Activated CD4-positive, alpha-beta T cell treated with anti-CD3 and anti-CD28 coated beads, Interleukin-2, amount 10 ng/mL, durations not matched to agents 24 days and 14 days (primary cell): ENCODE measurements at regions of chr3 and their contacts with region 1.

Region 1: GRCh38 chr3:52897130-52898122 is at the start of gene STIMATE:
- DNase-seq: peak; percentile 97
- H3K4me3 Mint-ChIP-seq: peak within 1 kb of the TSS; percentile 94
- H3K27ac Mint-ChIP-seq: peak within 1 kb of the TSS; percentile 90
- H3K4me1 Mint-ChIP-seq: peaks cover 42% of the 10 kb centered on the region
- H3K27me3 Mint-ChIP-seq: no peaks in the 10 kb centered on the region
- total RNA-seq, gene STIMATE: 13.8 and 18.6 TPM in 2 replicates

Region 2: DNA sequence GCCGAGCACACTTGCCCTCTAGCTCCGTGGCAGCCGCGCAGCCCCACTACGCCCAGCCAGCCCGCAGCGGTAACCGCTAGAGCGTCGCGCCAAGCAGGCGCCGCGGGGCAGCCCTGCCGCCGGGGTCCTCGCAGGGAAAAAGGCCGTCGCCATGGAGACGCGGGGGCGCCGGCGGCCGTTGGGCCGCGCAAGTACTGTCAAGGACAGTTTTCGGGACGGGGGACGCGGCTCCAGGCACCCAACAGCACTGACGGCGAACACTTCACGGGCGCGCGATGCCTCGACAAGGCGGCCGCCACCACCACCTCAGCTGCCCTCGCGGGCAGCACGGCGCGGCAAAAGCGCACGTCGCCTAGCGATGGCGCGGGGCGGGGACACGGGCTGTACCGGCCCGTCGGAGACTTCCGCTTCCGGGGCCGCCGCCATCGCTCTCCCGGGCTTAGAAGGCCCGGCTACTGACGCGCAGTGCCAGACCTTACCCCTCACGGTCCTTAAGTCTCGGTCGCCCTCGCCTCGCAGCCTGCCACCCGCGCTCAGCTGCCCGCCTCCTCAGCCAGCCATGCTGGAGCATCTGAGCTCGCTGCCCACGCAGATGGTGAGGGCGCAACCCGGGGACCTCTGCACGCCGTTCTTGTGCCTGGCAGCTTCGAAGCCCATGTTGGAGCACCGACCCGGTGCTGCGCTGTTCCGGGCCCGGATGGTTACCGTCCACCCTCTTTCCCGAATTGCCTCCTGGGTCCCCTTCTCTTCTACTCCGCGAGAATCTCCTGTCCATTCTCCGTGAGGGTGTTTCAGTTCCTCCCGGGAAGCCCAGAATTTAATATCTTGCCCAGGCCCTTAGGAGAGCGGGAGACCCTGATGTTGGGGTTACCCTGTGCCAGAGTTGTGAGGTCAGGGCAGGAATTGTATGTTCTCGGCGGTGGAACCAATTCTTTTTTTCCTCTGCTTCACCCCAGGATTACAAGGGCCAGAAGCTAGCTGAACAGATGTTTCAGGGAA is 191.4 kb before region 1 on chr3 and contains the starts of genes GLT8D1 and SPCS1:
- intact Hi-C with region 1: loop called (anchors 10 kb)
- DNase-seq: peak; percentile 96
- H3K4me3 Mint-ChIP-seq: peak within 1 kb of the TSS; percentile 94
- H3K27ac Mint-ChIP-seq: peak within 1 kb of the TSS; percentile 95
- H3K4me1 Mint-ChIP-seq: peaks cover 22% of the 10 kb centered on the region
- H3K27me3 Mint-ChIP-seq: no peaks in the 10 kb centered on the region
- total RNA-seq, gene GLT8D1: 38.7 and 39.0 TPM in 2 replicates
- total RNA-seq, gene SPCS1: 134 and 135 TPM in 2 replicates

Region 3: GRCh38 chr3:52873433-52874159 is 23.8 kb before region 1 on chr3:
- intact Hi-C with region 1: loop called (anchors 2 kb)
- DNase-seq: no peak
- H3K4me3 Mint-ChIP-seq: no peak overlapping the region
- H3K27ac Mint-ChIP-seq: no peak overlapping the region
- H3K4me1 Mint-ChIP-seq: peaks cover 23% of the 10 kb centered on the region
- H3K27me3 Mint-ChIP-seq: no peaks in the 10 kb centered on the region

Region 4: DNA sequence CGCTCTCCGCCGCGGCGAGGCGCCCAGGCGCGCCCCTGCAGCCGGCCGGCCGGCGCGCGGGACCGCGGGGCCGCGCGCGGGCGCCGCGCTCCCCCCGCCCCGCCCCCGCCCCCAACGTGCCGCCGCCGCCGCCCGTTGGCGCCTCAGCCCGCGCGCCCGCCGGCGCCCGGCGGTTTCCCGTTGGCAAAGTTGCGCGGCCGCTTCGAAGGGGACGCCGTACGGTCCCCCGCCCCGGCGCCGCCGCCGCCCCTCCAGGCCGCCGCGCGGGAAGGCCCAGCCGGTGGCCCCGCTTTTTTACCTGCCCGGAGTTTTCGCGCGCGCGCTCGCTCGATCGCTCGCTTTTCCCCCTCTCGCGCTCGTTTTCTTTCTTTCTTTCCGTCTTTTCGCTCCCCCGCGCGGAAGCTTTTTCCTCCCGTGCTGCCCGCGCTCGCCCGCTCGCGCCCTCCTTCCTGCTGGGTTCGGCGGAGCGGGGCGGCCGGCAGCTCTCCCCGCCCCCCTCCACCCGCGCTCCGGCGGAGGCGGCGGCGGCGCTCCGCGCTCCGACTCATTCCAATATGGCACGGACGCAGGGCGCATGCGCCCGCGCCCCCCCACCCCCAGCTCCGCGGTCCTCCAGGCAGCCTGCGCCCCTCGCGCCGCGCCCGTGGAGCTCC is 148.2 kb after region 1 on chr3 and contains the start of gene SFMBT1:
- intact Hi-C with region 1: loop called (anchors 2 kb)
- DNase-seq: peak; percentile 89
- H3K4me3 Mint-ChIP-seq: peak within 1 kb of the TSS; percentile 95
- H3K27ac Mint-ChIP-seq: peak within 1 kb of the TSS; percentile 95
- H3K4me1 Mint-ChIP-seq: peaks cover 28% of the 10 kb centered on the region
- H3K27me3 Mint-ChIP-seq: peaks cover 2% of the 10 kb centered on the region
- total RNA-seq, gene SFMBT1: 28.6 and 28.8 TPM in 2 replicates